ENCODE measurements at regions of chr1 and their contacts with region 1.

Region 1: GRCh38 chr1:241519308-241520079 is at the start of gene FH:
- DNase-seq: peak; percentile 96
- H3K4me3 Mint-ChIP-seq: peak within 1 kb of the TSS; percentile 87
- H3K27ac Mint-ChIP-seq: peak within 1 kb of the TSS; percentile 53
- H3K4me1 Mint-ChIP-seq: peaks cover 23% of the 10 kb centered on the region
- H3K27me3 Mint-ChIP-seq: peaks cover 21% of the 10 kb centered on the region
- total RNA-seq, gene FH: 85.7 to 89.1 TPM

Region 2: DNA sequence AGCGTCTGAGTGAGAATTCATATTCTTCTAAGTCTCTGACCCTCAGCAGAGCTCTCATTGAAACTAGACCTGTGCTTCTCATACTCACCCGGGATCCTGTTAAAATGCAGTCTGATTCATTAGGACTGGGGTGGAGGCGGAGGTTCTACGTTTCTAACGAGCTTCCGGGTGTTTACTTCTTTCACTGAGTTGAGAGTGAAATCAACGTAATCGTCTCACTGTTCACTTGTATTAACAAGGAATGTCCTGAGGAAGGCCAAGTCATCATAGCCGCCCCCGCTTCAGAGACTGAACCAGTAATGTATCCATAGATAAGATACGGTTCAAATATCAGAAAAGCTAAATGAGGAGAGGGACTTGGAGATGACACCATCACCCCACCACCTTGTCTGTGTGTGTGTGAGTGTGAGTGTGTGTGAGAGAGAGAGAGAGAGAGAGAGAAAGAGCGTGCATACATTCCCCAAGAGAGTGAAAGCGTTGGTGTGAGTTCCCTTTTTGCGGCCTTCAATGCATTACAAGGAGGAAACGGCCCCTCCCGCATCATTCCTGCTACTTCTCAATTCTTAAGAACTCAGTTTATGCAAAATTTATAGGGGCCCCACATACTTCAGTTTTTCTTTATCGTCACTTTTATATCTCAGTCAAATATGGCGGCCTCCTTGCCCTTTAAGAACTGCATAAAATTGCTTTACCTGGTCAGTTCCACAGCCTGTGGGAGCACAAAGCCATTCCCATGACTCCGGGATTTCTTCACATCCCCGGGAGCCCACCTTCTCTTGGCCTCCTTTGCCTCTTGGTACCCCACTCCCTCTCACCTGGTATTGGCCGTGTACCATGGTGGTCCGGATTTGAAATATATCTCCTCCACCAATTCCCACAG is 32.5 kb after region 1 on chr1:
- CTCF ChIA-PET with region 1: no interaction called
- POLR2A ChIA-PET with region 1: no interaction called
- intact Hi-C with region 1: loop called (anchors 1 kb)
- DNase-seq: peak; percentile 71
- H3K4me3 Mint-ChIP-seq: peak overlapping the region; percentile 68
- H3K27ac Mint-ChIP-seq: peak overlapping the region; percentile 96
- H3K4me1 Mint-ChIP-seq: peaks cover 23% of the 10 kb centered on the region
- H3K27me3 Mint-ChIP-seq: no peaks in the 10 kb centered on the region

Region 3: GRCh38 chr1:241592273-241592958 is 72.9 kb after region 1 on chr1:
- CTCF ChIA-PET with region 1: no interaction called
- POLR2A ChIA-PET with region 1: no interaction called
- intact Hi-C with region 1: loop called (anchors 1 kb)
- DNase-seq: no peak
- H3K4me3 Mint-ChIP-seq: no peak overlapping the region
- H3K27ac Mint-ChIP-seq: peak overlapping the region; percentile 49
- H3K4me1 Mint-ChIP-seq: peaks cover 27% of the 10 kb centered on the region
- H3K27me3 Mint-ChIP-seq: no peaks in the 10 kb centered on the region

Region 4: DNA sequence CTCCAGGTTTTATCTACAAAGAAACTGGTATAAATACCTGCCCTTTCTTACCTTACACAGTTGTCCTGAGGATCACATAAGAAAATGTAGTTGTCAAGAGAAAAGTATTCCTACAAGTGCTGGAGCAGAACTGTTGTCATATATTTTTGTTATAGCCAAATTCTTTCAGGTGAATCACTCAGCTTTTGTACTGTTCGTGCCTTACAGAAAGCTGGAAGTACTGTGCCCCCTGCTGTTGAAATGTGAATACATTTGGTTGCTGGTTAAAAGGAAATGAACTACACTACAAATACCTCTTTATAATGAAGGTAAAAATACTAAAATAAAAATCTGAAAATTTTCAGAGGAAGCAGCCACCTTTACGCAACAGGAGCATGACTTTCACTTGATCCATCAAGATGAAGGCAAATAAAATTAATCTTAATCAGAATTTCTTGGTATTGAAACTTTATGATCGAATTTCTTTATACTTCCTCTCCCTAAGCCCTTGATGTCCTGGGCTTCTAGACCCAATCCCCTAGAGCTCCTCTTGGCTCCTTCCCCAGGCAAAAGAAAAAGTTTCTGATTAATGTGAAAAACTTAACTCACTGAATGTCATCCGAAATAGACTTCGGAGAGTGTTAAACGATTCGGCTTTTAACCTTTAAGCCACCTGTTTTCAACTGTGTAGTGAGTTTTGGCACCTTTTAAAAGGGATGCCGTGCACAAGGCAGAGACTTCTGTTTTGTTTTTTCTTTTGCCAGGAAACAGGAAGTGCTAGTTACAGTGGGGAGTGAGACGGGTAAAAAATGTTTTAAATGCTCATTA is 108.2 kb after region 1 on chr1:
- CTCF ChIA-PET with region 1: interaction called, 11 read pairs
- POLR2A ChIA-PET with region 1: no interaction called
- intact Hi-C with region 1: loop called (anchors 2 kb)
- DNase-seq: peak; percentile 36
- H3K4me3 Mint-ChIP-seq: peak overlapping the region; percentile 14
- H3K27ac Mint-ChIP-seq: peak overlapping the region; percentile 20
- H3K4me1 Mint-ChIP-seq: peaks cover 10% of the 10 kb centered on the region
- H3K27me3 Mint-ChIP-seq: no peaks in the 10 kb centered on the region

Region 5: GRCh38 chr1:241640029-241640818 is 120.7 kb after region 1 on chr1 and contains the starts of genes CHML and OPN3:
- CTCF ChIA-PET with region 1: no interaction called
- POLR2A ChIA-PET with region 1: interaction called, 3 read pairs
- intact Hi-C with region 1: loop called (anchors 1 kb)
- DNase-seq: peak; percentile 95
- H3K4me3 Mint-ChIP-seq: peak within 1 kb of the TSS; percentile 85
- H3K27ac Mint-ChIP-seq: peak within 1 kb of the TSS; percentile 68
- H3K4me1 Mint-ChIP-seq: peaks cover 44% of the 10 kb centered on the region
- H3K27me3 Mint-ChIP-seq: no peaks in the 10 kb centered on the region
- total RNA-seq, gene CHML: 12.5 to 13.8 TPM
- total RNA-seq, gene OPN3: 8.0 to 9.0 TPM

Region 6: DNA sequence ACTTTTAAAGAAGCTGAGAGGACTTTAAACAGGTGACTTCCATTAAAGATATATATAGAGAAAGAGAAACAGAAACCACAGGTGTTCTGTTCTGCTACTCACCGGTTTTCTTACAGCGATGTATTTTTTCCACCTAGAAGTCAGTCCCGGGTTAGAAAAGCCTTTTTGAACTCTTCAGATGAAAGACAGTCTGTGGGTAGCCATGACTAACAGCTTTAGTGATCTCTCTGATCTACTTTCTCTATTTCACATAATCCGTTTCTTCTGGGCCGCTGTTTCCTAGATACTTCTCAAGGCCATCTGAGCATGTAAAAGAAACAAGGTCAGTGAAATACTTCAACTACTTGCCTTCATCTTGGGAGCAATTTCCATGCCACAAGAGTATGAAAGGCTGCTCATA is 157.7 kb after region 1 on chr1:
- CTCF ChIA-PET with region 1: no interaction called
- POLR2A ChIA-PET with region 1: no interaction called
- intact Hi-C with region 1: loop called (anchors 1 kb)
- DNase-seq: no peak
- H3K4me3 Mint-ChIP-seq: no peak overlapping the region
- H3K27ac Mint-ChIP-seq: no peak overlapping the region
- H3K4me1 Mint-ChIP-seq: peaks cover 15% of the 10 kb centered on the region
- H3K27me3 Mint-ChIP-seq: peaks cover 2% of the 10 kb centered on the region

Region 7: DNA sequence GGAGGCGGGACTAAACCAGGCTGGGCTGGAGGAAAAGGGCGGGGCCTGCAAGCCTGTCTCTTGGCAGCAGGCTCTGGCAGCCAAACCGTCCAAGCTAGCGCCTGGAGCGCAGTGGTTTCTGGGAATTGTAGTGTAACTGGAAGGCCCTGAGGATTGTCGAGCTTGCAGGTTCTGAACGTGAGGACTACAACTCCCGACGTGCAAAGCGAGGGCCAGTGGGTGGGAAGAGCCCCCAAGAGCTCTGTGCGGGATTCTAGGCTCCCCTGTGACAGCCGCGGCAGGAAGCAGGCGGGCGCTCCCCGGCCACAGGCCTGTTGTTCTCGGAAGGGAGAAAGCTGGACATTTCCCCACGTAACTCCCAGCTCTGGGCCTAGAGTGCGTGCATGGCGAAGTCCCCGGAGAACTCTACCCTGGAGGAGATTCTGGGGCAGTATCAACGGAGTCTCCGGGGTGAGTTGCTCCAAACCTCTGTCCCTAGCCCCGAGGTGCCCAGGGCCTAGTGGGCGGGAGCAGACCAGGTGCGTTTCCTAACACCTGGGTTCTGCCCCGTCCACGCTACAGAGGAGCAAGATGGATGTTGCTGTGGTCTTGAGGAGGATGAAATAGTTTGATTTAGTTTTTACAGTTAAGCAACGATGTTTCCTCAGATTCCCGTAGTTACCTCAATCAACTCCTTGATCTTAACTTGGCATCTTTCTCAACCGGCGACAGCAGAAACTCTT is 1736.5 kb after region 1 on chr1 and contains the start of gene SDCCAG8:
- CTCF ChIA-PET with region 1: no interaction called
- POLR2A ChIA-PET with region 1: no interaction called
- intact Hi-C with region 1: loop called (anchors 2 kb)
- DNase-seq: peak; percentile 97
- H3K4me3 Mint-ChIP-seq: peak within 1 kb of the TSS; percentile 95
- H3K27ac Mint-ChIP-seq: peak within 1 kb of the TSS; percentile 100
- H3K4me1 Mint-ChIP-seq: peaks cover 40% of the 10 kb centered on the region
- H3K27me3 Mint-ChIP-seq: peaks cover 3% of the 10 kb centered on the region
- total RNA-seq, gene SDCCAG8: 20.7 to 23.2 TPM